Heart left ventricle (tissue), 16 donors: ENCODE measurements at regions of chr9 and their contacts with region 1.

Region 1: GRCh38 chr9:121640076-121640475 is 11.4 kb upstream of the DAB2IP start:
- DNase-seq: peak; percentile 62 to 82 (median 65)
- ATAC-seq: peak; percentile 55 to 81 (median 74)
- H3K4me3 ChIP-seq: no peak overlapping the region
- H3K27ac ChIP-seq: peak overlapping the region in 10 of 12 donors; percentile 36 to 66 (median 55)
- H3K4me1 ChIP-seq: peaks cover 19 to 75% (median 52%) of the 10 kb centered on the region in 12 donors
- H3K27me3 ChIP-seq: no peaks in the 10 kb centered on the region
- CTCF ChIP-seq: peak; percentile 53 to 76 (median 64)
- POLR2A ChIP-seq: no peak

Region 2: DNA sequence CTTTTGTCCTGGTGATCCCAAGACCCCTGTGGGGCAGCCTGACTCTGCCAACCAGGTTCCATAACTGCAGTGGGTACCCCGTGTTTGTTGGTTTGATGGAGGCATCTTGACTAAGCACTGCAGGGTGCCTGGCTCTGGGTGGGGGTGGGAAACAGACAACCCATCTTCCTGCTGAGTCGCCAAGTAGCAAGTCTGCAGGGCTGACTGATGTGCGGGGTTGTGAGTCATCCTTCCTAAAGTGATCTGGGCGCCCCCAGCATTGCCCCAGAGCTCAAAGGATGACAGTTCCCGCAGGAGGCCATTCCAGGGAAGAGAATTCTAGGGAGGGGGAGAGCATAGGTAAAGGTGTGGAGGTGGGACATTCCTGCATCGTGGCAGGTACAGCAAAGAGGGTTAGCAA is 34.9 kb after region 1 on chr9:
- intact Hi-C with region 1: loop called in 4 of 10 experiments (anchors 5 kb)
- DNase-seq: no peak
- ATAC-seq: no peak
- H3K4me3 ChIP-seq: no peak overlapping the region
- H3K27ac ChIP-seq: peak overlapping the region in 1 of 12 donors; percentile 42
- H3K4me1 ChIP-seq: peaks cover 4 to 70% (median 53%) of the 10 kb centered on the region in 12 donors
- H3K27me3 ChIP-seq: no peaks in the 10 kb centered on the region
- CTCF ChIP-seq: no peak
- POLR2A ChIP-seq: no peak

Region 3: GRCh38 chr9:121686930-121687541 is 47.0 kb after region 1 on chr9:
- intact Hi-C with region 1: loop called in 5 of 10 experiments (anchors 1 to 5 kb)
- DNase-seq: peak in 4 of 5 donors; percentile 71 to 84 (median 76)
- ATAC-seq: peak; percentile 56 to 72 (median 62)
- H3K4me3 ChIP-seq: no peak overlapping the region
- H3K27ac ChIP-seq: peak overlapping the region in 4 of 12 donors; percentile 14 to 42 (median 36)
- H3K4me1 ChIP-seq: peaks cover 3 to 68% (median 28%) of the 10 kb centered on the region in 12 donors
- H3K27me3 ChIP-seq: no peaks in the 10 kb centered on the region
- CTCF ChIP-seq: peak; percentile 70 to 91 (median 82)
- POLR2A ChIP-seq: no peak

Region 4: GRCh38 chr9:121744002-121744686 is 104.1 kb after region 1 on chr9:
- intact Hi-C with region 1: loop called in 1 of 10 experiments (anchors 5 kb)
- DNase-seq: peak in 4 of 5 donors; percentile 70 to 79 (median 75)
- ATAC-seq: peak; percentile 61 to 72 (median 63)
- H3K4me3 ChIP-seq: peak overlapping the region; percentile 15 to 75 (median 56)
- H3K27ac ChIP-seq: peak overlapping the region; percentile 87 to 99 (median 94)
- H3K4me1 ChIP-seq: peaks cover 23 to 99% (median 94%) of the 10 kb centered on the region in 12 donors
- H3K27me3 ChIP-seq: no peaks in the 10 kb centered on the region
- CTCF ChIP-seq: peak; percentile 18 to 78 (median 55)
- POLR2A ChIP-seq: no peak